Mammary epithelial cell (primary cell): ENCODE measurements at regions of chr16 and their contacts with region 1.

Region 1: DNA sequence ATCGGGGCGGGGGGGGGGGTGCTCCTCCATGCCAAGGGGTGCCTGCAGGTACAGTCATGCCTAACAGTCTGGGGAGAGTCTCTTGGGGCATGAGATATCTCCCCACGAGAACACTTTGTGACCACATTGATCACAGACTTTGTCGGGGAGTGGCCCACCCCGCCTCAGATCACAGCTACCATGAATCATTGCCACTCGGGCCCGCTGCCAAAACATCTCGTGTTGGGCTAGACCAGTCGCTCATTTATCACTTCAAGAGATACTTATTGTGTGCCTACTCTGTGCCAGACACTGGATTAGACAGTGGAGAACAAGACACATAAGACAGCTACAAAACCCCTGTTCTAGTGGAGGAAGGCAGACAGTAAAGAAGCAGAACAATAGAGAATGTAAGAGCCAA is 72.6 kb downstream of the CLEC16A start:
- DNase-seq: peak; percentile 93
- H3K4me3 ChIP-seq: no peak overlapping the region
- H3K27ac ChIP-seq: peak overlapping the region; percentile 66
- H3K4me1 ChIP-seq: peaks cover 31% of the 10 kb centered on the region
- H3K27me3 ChIP-seq: no peaks in the 10 kb centered on the region
- CTCF ChIP-seq: no peak

Region 2: DNA sequence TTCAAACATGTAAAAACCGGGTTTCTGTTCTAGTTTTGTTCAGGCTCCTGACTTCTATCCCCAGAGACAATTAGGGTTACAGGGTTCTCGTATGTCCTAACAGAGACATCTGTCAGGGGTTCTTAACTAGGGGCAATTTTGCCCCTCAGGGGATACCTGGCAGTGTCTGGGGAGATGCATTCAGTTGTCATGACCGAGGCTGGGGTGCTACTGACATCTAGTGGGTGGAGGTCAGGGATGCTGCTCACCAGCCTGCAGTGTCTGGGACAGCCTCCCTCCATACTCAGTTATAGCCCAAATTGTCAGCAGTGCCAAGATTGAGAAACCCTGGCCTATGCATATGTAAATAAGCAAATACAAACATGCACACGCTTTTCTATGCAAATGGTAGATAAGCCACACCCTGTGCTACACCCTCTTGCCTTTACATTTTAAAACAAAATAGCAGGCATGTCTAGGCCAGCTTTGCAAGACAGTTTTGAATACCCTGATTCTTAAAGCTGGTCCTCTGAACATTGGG is 35.2 kb before region 1 on chr16:
- CTCF ChIA-PET with region 1: no interaction called
- dilution Hi-C with region 1: loop called (anchors 5 kb)
- in situ Hi-C with region 1: no loop called
- intact Hi-C with region 1: no loop called
- DNase-seq: peak; percentile 22
- H3K4me3 ChIP-seq: no peak overlapping the region
- H3K27ac ChIP-seq: no peak overlapping the region
- H3K4me1 ChIP-seq: peaks cover 16% of the 10 kb centered on the region
- H3K27me3 ChIP-seq: no peaks in the 10 kb centered on the region
- CTCF ChIP-seq: peak; percentile 42 to 63

Region 3: DNA sequence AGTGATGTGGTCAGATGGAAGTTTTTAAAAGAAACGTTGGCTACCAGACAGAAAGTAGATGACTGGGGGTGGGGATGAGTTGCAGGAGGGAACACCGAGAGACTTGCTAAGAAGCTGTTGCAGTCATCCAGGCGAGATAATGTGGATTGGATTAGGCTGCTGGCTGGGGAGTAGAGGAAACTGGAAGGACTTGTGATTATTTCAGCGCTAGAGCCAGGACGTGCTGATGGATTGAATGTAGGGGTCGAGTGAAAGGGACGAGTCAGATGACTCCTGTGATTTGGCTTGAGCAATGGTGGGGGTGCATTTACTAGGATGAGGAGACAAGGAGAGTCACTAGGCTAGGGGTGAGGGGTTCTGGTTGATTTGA is 15.9 kb after region 1 on chr16:
- CTCF ChIA-PET with region 1: no interaction called
- dilution Hi-C with region 1: no loop called
- in situ Hi-C with region 1: no loop called
- intact Hi-C with region 1: loop called (anchors 1 kb)
- DNase-seq: no peak
- H3K4me3 ChIP-seq: no peak overlapping the region
- H3K27ac ChIP-seq: no peak overlapping the region
- H3K4me1 ChIP-seq: peaks cover 7% of the 10 kb centered on the region
- H3K27me3 ChIP-seq: no peaks in the 10 kb centered on the region
- CTCF ChIP-seq: no peak

Region 4: GRCh38 chr16:11076259-11077018 is 59.4 kb after region 1 on chr16:
- CTCF ChIA-PET with region 1: no interaction called
- dilution Hi-C with region 1: no loop called
- in situ Hi-C with region 1: no loop called
- intact Hi-C with region 1: no loop called
- DNase-seq: no peak
- H3K4me3 ChIP-seq: no peak overlapping the region
- H3K27ac ChIP-seq: no peak overlapping the region
- H3K4me1 ChIP-seq: peaks cover 8% of the 10 kb centered on the region
- H3K27me3 ChIP-seq: no peaks in the 10 kb centered on the region
- CTCF ChIP-seq: no peak

Region 5: GRCh38 chr16:11100239-11100750 is 83.3 kb after region 1 on chr16:
- CTCF ChIA-PET with region 1: no interaction called
- dilution Hi-C with region 1: no loop called
- in situ Hi-C with region 1: no loop called
- intact Hi-C with region 1: no loop called
- DNase-seq: no peak
- H3K4me3 ChIP-seq: no peak overlapping the region
- H3K27ac ChIP-seq: no peak overlapping the region
- H3K4me1 ChIP-seq: no peaks in the 10 kb centered on the region
- H3K27me3 ChIP-seq: no peaks in the 10 kb centered on the region
- CTCF ChIP-seq: peak in 1 of 2 donors; percentile 28

Region 6: GRCh38 chr16:11386791-11387546 is 370.0 kb after region 1 on chr16:
- CTCF ChIA-PET with region 1: no interaction called
- dilution Hi-C with region 1: no loop called
- in situ Hi-C with region 1: no loop called
- intact Hi-C with region 1: no loop called
- DNase-seq: no peak
- H3K4me3 ChIP-seq: no peak overlapping the region
- H3K27ac ChIP-seq: no peak overlapping the region
- H3K4me1 ChIP-seq: peaks cover 5% of the 10 kb centered on the region
- H3K27me3 ChIP-seq: no peaks in the 10 kb centered on the region
- CTCF ChIP-seq: no peak